ENCODE measurements at regions of chrX and their contacts with region 1.

Region 1: DNA sequence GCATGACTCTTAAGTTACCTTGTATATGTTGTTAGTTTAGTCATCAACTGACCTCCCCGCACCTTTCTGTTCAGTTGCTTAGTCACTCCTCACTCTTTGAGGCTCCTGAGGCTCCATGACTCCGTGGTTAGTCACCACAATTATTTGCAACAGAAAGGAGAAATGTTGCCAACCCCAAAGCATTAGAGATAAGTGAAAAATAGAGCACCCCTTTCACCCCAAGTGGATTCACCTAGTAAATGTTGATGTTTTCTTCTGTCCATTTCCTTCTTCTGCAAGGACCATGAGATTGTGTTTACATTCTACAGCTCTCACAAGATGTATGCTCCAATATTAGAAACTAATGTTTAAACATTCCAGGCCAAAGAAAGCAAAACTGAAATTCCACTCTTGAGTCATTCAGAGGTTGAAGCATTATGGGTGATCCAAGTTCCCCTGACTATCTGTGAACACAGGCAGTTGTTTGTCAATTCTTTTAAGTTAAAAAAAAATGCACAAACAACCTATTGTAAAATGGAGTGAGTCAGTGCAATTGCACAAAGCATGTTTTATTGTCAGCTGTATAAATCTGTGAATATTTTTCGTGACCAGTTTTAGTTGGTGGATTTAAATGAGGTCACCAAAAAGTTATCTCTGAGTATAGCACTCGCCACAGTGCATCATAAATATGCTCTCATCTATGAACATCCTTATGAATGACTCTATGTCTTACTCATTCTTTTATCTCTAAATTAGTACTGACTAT is 552.4 kb upstream of the MAGEB2 start:
- DNase-seq: peak; percentile 97
- H3K4me3 ChIP-seq: peak overlapping the region in 1 of 3 experiments; percentile 23
- H3K27ac ChIP-seq: peak overlapping the region; percentile 95
- H3K4me1 ChIP-seq: peaks cover 21% of the 10 kb centered on the region
- H3K27me3 ChIP-seq: no peaks in the 10 kb centered on the region
- CTCF ChIP-seq: no peak

Region 2: GRCh38 chrX:27998666-27999065 is 1664.3 kb before region 1 on chrX:
- CTCF ChIA-PET with region 1: no interaction called
- dilution Hi-C with region 1: no loop called
- in situ Hi-C with region 1: no loop called
- intact Hi-C with region 1: loop called (anchors 5 kb)
- DNase-seq: no peak
- H3K4me3 ChIP-seq: no peak overlapping the region
- H3K27ac ChIP-seq: no peak overlapping the region
- H3K4me1 ChIP-seq: peaks cover 3% of the 10 kb centered on the region
- H3K27me3 ChIP-seq: peaks cover 3% of the 10 kb centered on the region
- CTCF ChIP-seq: no peak

Region 3: DNA sequence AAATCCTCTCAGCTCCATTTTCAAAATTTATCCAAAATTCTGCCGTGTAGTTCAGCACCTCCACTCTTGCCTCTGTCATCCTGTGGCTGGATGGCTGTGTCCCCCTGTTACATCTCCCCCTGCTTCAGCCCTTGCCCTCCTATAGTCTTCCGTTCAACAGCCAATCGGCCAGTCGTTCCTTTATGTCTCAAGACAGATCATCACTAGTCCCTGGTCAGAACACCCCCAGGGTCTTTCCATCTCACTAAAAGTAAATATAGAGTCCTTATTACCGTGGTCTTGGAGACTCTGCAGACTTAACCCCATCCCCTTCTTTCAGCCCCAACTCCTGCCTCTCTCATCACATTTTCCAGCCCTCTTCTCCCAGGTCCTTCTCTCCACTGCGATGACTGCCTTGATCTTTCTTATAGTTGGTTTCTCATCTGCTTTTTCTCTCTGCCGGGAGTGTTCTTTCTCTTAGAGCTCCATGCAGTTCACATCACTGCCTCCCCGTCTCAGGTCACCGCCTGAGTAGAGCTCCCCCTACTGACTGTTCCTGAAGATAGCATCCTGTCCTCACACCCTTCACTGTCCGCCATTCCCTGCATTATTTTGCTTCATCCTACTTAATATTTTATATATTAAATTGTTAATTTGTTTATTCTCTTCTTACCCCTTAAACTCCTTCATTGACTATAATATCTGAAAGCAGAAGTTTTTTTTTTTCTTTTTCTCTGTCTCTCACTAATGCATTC is 184.4 kb before region 1 on chrX:
- CTCF ChIA-PET with region 1: interaction called, 13 read pairs
- dilution Hi-C with region 1: no loop called
- in situ Hi-C with region 1: no loop called
- intact Hi-C with region 1: loop called (anchors 5 kb)
- DNase-seq: peak; percentile 19
- H3K4me3 ChIP-seq: no peak overlapping the region
- H3K27ac ChIP-seq: no peak overlapping the region
- H3K4me1 ChIP-seq: no peaks in the 10 kb centered on the region
- H3K27me3 ChIP-seq: no peaks in the 10 kb centered on the region
- CTCF ChIP-seq: peak; percentile 79 to 86

Region 4: DNA sequence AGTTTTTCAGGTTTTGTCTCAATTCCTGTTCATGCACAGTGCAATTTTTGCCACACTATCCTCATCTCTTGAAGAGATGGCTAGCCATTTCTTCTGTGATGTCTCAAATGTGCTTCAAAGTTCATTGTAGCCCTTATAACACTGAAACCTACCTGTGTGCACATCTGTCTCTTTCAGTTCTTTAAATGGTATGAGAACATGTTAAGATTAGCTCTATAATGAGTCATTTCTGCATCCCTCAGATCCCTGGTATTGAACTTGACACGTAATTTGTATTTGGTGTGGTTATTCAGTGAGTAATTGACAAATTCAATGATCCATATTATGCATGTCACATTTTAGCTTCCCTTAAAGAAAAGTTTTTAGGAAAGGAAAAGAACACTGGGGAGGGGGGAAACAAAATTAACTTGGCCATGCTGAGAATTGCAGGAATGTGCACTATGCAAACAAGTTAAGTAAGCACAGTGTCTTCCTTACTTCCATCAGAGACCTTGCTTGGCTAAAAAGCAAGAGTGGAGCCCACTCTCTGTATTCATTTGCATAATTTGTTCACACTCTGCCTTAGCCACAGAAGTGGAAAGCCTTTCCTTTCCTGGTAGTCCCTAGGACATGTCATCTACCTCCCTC is 107.4 kb before region 1 on chrX:
- CTCF ChIA-PET with region 1: no interaction called
- dilution Hi-C with region 1: no loop called
- in situ Hi-C with region 1: no loop called
- intact Hi-C with region 1: loop called (anchors 5 kb)
- DNase-seq: peak; percentile 46
- H3K4me3 ChIP-seq: no peak overlapping the region
- H3K27ac ChIP-seq: no peak overlapping the region
- H3K4me1 ChIP-seq: peaks cover 6% of the 10 kb centered on the region
- H3K27me3 ChIP-seq: no peaks in the 10 kb centered on the region
- CTCF ChIP-seq: no peak

Region 5: DNA sequence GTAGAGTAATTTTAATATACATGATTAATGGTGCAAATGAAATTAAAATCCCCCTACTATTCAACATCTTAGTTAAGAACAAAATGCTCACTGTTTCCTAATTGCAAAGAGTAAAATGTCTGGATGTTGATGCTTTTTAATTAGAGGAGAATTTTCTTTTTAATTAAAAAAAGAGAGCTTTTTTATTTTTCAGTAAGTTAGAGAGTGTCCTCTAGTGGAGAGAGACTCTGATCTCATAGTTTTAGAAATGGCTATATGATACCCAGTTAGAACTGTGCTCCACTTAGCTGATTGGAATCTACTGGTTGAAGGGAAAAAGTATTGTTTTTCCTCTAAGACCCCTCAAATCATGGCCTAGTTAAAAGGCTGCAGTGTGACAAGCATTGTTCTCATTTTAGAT is 240.4 kb after region 1 on chrX:
- CTCF ChIA-PET with region 1: no interaction called
- dilution Hi-C with region 1: no loop called
- in situ Hi-C with region 1: no loop called
- intact Hi-C with region 1: no loop called
- DNase-seq: no peak
- H3K4me3 ChIP-seq: no peak overlapping the region
- H3K27ac ChIP-seq: no peak overlapping the region
- H3K4me1 ChIP-seq: no peaks in the 10 kb centered on the region
- H3K27me3 ChIP-seq: no peaks in the 10 kb centered on the region
- CTCF ChIP-seq: peak; percentile 34 to 51

Region 6: DNA sequence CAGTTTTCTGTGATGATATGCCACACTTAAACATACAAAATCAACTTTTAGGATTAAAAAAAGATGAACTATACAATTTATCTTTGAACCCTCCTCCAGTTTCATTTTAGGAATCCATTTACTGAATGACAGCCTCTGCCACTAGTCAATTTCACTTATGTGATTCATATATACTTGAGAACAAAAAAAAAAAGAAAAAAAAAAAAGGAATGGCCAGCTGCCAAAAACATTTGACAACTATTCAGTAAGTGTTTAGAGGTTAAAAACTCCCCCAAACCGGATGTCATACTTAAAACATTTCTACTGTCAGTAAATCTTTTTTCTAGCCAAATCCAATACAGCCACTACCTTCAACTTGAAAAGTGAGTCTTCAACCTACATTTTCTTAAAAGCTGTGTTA is 285.7 kb after region 1 on chrX:
- CTCF ChIA-PET with region 1: no interaction called
- dilution Hi-C with region 1: no loop called
- in situ Hi-C with region 1: no loop called
- intact Hi-C with region 1: no loop called
- DNase-seq: no peak
- H3K4me3 ChIP-seq: no peak overlapping the region
- H3K27ac ChIP-seq: no peak overlapping the region
- H3K4me1 ChIP-seq: no peaks in the 10 kb centered on the region
- H3K27me3 ChIP-seq: no peaks in the 10 kb centered on the region
- CTCF ChIP-seq: no peak